Activated CD8-positive, alpha-beta T cell treated with anti-CD3 and anti-CD28 coated beads, Interleukin-2, amount 10 ng/mL, durations not matched to agents 7 days and 5 days (primary cell): ENCODE measurements at regions of chr1 and their contacts with region 1.

Region 1: DNA sequence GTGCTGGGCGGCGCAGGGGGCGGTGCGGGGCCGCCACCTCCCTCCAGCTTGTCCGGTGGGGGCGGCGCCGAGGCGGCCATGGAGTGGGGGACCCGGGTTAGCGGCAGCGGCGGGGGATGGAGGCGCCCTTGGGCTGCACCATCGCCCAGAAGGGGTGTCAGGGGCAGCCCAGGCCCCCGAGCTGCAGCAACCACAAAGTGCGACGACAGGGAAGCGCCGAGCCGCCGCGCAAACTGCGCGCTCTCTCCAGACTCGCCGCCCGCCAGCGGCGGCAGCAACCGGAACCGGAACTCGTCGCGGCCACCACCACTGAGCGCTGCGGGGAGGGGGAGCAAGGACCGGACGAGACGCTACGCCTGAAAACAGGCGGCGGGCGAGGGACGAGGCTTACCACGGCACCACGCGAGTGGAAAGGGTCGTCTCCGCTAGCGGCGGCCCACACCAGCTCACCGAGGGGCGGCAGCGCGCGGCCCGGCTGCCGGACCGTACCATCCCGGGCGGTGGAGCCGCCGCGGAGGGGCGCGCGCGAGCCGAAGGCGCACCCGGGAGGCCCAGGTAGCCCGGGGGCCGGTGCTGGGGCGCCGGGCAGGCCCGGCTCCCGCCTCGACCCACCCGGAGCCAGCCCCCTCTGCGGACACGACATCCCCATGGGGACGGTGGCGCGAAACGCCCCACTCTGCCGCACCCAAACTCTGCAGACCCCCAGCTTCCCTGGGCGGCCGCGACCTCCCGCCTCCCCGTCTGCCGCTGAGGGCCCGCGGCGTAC is at the start of gene PYGO2:
- DNase-seq: peak; percentile 85
- ATAC-seq: peak; percentile 83
- H3K4me3 Mint-ChIP-seq: peak within 1 kb of the TSS; percentile 94
- H3K27ac Mint-ChIP-seq: peak within 1 kb of the TSS; percentile 89
- H3K4me1 Mint-ChIP-seq: peaks cover 43% of the 10 kb centered on the region
- H3K27me3 Mint-ChIP-seq: no peaks in the 10 kb centered on the region
- total RNA-seq, gene PYGO2: 40.2 to 43.9 TPM

Region 2: GRCh38 chr1:154974063-154974807 is 12.6 kb after region 1 on chr1 and contains the start of gene CKS1B:
- CTCF ChIA-PET with region 1: interaction called, 20 read pairs
- POLR2A ChIA-PET with region 1: interaction called, 31 read pairs
- DNase-seq: peak; percentile 98
- ATAC-seq: peak; percentile 91
- H3K4me3 Mint-ChIP-seq: no peak within 1 kb of the TSS
- H3K27ac Mint-ChIP-seq: no peak within 1 kb of the TSS
- H3K4me1 Mint-ChIP-seq: peaks cover 40% of the 10 kb centered on the region
- H3K27me3 Mint-ChIP-seq: no peaks in the 10 kb centered on the region
- total RNA-seq, gene CKS1B: 151 to 153 TPM

Region 3: GRCh38 chr1:154982897-154983648 is 21.4 kb after region 1 on chr1 and contains the start of gene FLAD1:
- CTCF ChIA-PET with region 1: interaction called, 10 read pairs
- POLR2A ChIA-PET with region 1: interaction called, 10 read pairs
- DNase-seq: peak; percentile 99
- ATAC-seq: peak; percentile 100
- H3K4me3 Mint-ChIP-seq: no peak within 1 kb of the TSS
- H3K27ac Mint-ChIP-seq: peak within 1 kb of the TSS; percentile 67
- H3K4me1 Mint-ChIP-seq: peaks cover 20% of the 10 kb centered on the region
- H3K27me3 Mint-ChIP-seq: no peaks in the 10 kb centered on the region
- total RNA-seq, gene FLAD1: 39.8 to 45.2 TPM

Region 4: GRCh38 chr1:155050560-155051341 is 89.1 kb after region 1 on chr1 and contains the start of gene ADAM15:
- CTCF ChIA-PET with region 1: interaction called, 11 read pairs
- POLR2A ChIA-PET with region 1: no interaction called
- DNase-seq: peak; percentile 81
- ATAC-seq: peak; percentile 89
- H3K4me3 Mint-ChIP-seq: peak within 1 kb of the TSS; percentile 83
- H3K27ac Mint-ChIP-seq: peak within 1 kb of the TSS; percentile 85
- H3K4me1 Mint-ChIP-seq: peaks cover 31% of the 10 kb centered on the region
- H3K27me3 Mint-ChIP-seq: peaks cover under 1% of the 10 kb centered on the region
- total RNA-seq, gene ADAM15: 29.7 to 29.8 TPM

Region 5: DNA sequence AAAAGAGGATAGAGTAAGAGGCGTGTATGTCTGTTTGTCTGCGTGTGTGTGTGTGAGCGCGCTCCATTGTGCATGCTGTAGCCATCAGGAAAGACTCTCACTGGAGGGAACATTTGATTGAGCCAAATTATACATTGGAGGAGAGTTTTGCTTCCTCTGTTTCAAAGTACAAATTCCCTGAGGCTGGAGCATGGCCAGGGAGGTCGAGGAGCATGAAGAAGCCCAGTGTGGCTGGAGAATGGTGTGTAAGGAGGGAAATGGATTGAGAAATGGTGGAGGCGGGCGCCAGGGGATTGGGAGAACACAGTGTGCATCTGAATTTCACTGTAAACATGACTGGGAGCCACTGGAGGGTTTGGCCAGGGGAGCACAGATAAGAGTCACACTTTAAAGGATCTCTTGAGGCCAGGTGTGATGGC is 143.9 kb after region 1 on chr1:
- CTCF ChIA-PET with region 1: no interaction called
- POLR2A ChIA-PET with region 1: no interaction called
- DNase-seq: no peak
- ATAC-seq: no peak
- H3K4me3 Mint-ChIP-seq: no peak overlapping the region
- H3K27ac Mint-ChIP-seq: no peak overlapping the region
- H3K4me1 Mint-ChIP-seq: no peaks in the 10 kb centered on the region
- H3K27me3 Mint-ChIP-seq: peaks cover 3% of the 10 kb centered on the region